Activated CD4-positive, alpha-beta memory T cell treated with anti-CD3 and anti-CD28 coated beads for 36 hours (primary cell): ENCODE measurements at regions of chr14 and their contacts with region 1.

Region 1: DNA sequence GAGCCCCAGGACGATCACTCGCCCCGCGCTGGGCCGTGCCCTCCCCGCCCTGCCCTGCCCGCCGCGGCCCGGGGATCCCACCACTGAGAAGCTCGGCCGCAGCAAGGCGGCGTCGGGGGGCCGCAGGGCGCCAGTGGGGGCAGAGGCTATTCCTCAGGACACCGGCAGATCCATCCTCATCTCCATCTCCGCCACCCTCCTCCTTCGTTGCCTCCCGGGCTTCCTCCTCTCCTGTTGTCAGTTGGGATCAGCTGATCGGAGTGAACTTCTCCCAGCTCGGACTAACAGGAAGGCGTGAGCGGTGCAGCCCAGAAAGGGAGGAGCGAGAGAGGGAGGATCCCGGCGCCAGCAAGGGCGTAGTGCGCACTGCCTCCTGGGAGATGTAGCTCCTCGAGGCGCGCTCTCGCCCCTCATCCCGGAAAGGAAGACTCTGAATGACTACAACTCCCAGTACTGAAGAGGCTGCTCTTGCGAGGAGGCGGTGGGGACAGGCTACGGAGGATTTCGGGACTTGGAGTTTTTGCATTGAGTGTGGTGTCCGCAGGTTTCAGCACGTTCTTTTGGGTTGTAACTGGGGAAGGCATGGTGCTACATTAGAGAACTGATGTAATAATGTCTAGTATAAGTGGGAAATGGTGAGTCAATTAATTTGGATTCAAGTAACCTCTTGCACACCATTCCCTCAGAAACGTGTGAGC is at the start of gene ZFYVE1:
- DNase-seq: peak; percentile 96
- H3K4me3 Mint-ChIP-seq: peak within 1 kb of the TSS; percentile 93
- H3K27ac Mint-ChIP-seq: peak within 1 kb of the TSS; percentile 83
- H3K4me1 Mint-ChIP-seq: peaks cover 37% of the 10 kb centered on the region
- H3K27me3 Mint-ChIP-seq: no peaks in the 10 kb centered on the region
- total RNA-seq, gene ZFYVE1: 9.9 TPM

Region 2: DNA sequence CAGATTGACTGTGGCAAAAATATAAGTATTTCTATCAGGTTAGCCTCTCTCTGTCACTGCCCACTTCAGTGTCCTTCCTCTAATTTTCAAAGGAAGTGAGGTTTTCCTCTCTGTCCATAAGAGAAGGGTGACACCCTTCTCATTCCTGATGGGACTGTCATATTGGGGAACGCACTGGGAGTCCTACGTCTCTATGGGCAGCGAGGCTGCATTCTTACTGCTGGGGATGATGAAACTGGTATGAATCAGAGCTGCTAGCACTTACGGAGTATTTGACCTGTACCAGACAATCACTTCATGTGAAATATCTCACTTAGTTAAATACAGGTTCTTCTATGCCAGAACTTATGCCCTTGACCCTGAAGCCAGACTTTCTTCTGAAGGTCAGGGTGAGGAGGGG is 569.4 kb before region 1 on chr14:
- CTCF ChIA-PET with region 1: no interaction called
- POLR2A ChIA-PET with region 1: no interaction called
- intact Hi-C with region 1: no loop called
- DNase-seq: no peak
- H3K4me3 Mint-ChIP-seq: no peak overlapping the region
- H3K27ac Mint-ChIP-seq: no peak overlapping the region
- H3K4me1 Mint-ChIP-seq: peaks cover 5% of the 10 kb centered on the region
- H3K27me3 Mint-ChIP-seq: peaks cover 3% of the 10 kb centered on the region

Region 3: DNA sequence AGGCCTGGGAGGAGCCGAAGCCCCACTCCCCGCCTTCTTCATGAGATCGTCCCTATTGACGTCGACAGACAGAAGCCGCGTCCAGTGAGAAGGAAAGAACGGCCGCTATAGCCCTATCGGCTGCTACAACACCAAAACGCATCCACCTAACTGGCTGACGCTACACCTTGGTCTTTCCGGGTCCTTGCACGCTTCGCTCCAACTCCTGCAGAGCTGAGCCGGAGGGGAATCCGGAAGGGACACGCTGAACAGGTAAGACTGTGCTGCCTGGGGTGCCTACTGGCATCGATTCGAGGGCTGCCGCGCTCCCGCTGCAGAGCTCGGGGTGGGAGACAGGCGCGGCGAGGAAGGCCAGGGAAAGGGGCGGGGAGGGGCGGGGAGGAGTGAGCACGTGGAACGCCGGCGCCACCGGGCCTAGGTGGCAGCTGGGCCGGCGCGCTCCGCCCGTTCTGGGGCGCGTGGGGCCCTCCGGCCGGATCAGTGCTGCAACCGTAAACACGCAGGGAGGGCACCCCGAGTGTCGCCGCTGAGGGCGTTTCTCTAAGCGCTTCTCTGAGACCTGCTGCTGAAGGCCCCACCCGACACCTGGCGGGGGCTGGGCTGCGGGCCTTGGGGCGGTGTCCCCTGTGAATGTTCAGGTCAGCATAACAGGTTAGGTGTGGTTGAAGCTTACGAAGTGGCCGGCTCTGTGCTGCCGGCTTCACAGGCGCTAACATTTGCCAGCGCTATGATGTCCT is 100.5 kb before region 1 on chr14 and contains the start of gene DCAF4:
- CTCF ChIA-PET with region 1: no interaction called
- POLR2A ChIA-PET with region 1: interaction called, 4 read pairs
- intact Hi-C with region 1: loop called (anchors 2 kb)
- DNase-seq: peak; percentile 97
- H3K4me3 Mint-ChIP-seq: peak within 1 kb of the TSS; percentile 91
- H3K27ac Mint-ChIP-seq: peak within 1 kb of the TSS; percentile 69
- H3K4me1 Mint-ChIP-seq: peaks cover 18% of the 10 kb centered on the region
- H3K27me3 Mint-ChIP-seq: peaks cover 2% of the 10 kb centered on the region
- total RNA-seq, gene DCAF4: 13.4 to 13.6 TPM

Region 4: GRCh38 chr14:73014105-73014504 is 12.9 kb before region 1 on chr14:
- CTCF ChIA-PET with region 1: interaction called, 7 read pairs
- POLR2A ChIA-PET with region 1: interaction called, 3 read pairs
- intact Hi-C with region 1: loop called (anchors 1 kb)
- DNase-seq: no peak
- H3K4me3 Mint-ChIP-seq: no peak overlapping the region
- H3K27ac Mint-ChIP-seq: peak overlapping the region; percentile 9
- H3K4me1 Mint-ChIP-seq: peaks cover 27% of the 10 kb centered on the region
- H3K27me3 Mint-ChIP-seq: no peaks in the 10 kb centered on the region

Region 5: GRCh38 chr14:73136387-73137225 is 109.6 kb after region 1 on chr14 and contains the start of gene PSEN1:
- CTCF ChIA-PET with region 1: no interaction called
- POLR2A ChIA-PET with region 1: no interaction called
- intact Hi-C with region 1: loop called (anchors 1 kb)
- DNase-seq: peak; percentile 98
- H3K4me3 Mint-ChIP-seq: peak within 1 kb of the TSS; percentile 93
- H3K27ac Mint-ChIP-seq: peak within 1 kb of the TSS; percentile 97
- H3K4me1 Mint-ChIP-seq: peaks cover 25% of the 10 kb centered on the region
- H3K27me3 Mint-ChIP-seq: no peaks in the 10 kb centered on the region
- total RNA-seq, gene PSEN1: 30.3 to 31.6 TPM